Aorta (tissue), 5 donors: ENCODE measurements at regions of chr1 and their contacts with region 1.

Region 1: DNA sequence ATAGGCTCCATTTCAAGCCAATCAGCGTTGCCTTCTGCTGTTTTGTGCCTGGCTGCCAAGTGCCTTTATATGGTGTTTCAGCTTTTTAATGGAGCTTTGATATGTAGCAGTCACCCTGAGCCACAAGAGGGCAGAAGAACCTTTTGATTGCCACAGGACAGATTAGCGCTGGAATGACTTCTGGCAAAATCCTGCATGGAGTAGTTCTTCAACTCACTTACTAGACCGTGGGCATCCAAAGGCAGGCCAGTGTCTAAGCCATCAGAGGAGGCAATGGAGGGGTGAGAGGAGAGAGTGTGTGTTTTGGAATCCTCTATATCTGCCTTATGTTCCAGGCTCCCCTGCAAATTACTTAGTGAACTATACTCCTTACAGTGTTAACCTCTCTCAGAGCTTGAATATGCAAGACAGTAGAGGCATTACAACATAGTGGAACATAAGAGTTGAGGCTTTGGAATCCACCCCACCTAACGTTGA is 56.2 kb downstream of the ST3GAL3 start:
- DNase-seq: peak in 1 of 2 donors; percentile 75
- ATAC-seq: peak; percentile 95
- H3K4me3 ChIP-seq: no peak overlapping the region
- H3K27ac ChIP-seq: peak overlapping the region in 1 of 2 donors; percentile 17
- H3K4me1 ChIP-seq: peaks cover 0 to 3% of the 10 kb centered on the region in 2 donors
- H3K27me3 ChIP-seq: no peaks in the 10 kb centered on the region

Region 2: GRCh38 chr1:43435146-43436145 is 328.1 kb before region 1 on chr1:
- intact Hi-C with region 1: no loop called
- DNase-seq: peak; percentile 63 to 67
- ATAC-seq: peak; percentile 86
- H3K4me3 ChIP-seq: no peak overlapping the region
- H3K27ac ChIP-seq: peak overlapping the region in 1 of 2 donors; percentile 29
- H3K4me1 ChIP-seq: no peaks in the 10 kb centered on the region
- H3K27me3 ChIP-seq: no peaks in the 10 kb centered on the region

Region 3: GRCh38 chr1:43934101-43934985 is 170.8 kb after region 1 on chr1:
- intact Hi-C with region 1: loop called (anchors 1 to 2 kb)
- DNase-seq: peak; percentile 70 to 88
- ATAC-seq: peak; percentile 63
- H3K4me3 ChIP-seq: no peak overlapping the region
- H3K27ac ChIP-seq: no peak overlapping the region
- H3K4me1 ChIP-seq: no peaks in the 10 kb centered on the region
- H3K27me3 ChIP-seq: no peaks in the 10 kb centered on the region

Region 4: GRCh38 chr1:43991476-43992231 is 228.1 kb after region 1 on chr1 and contains the start of gene CCDC24:
- intact Hi-C with region 1: no loop called
- DNase-seq: peak; percentile 93 to 97
- ATAC-seq: peak; percentile 92
- H3K4me3 ChIP-seq: peak within 1 kb of the TSS; percentile 36 to 55
- H3K27ac ChIP-seq: peak within 1 kb of the TSS in 1 of 2 donors; percentile 34
- H3K4me1 ChIP-seq: no peaks in the 10 kb centered on the region
- H3K27me3 ChIP-seq: no peaks in the 10 kb centered on the region
- total RNA-seq, gene CCDC24: 2.6 to 6.0 TPM

Region 5: DNA sequence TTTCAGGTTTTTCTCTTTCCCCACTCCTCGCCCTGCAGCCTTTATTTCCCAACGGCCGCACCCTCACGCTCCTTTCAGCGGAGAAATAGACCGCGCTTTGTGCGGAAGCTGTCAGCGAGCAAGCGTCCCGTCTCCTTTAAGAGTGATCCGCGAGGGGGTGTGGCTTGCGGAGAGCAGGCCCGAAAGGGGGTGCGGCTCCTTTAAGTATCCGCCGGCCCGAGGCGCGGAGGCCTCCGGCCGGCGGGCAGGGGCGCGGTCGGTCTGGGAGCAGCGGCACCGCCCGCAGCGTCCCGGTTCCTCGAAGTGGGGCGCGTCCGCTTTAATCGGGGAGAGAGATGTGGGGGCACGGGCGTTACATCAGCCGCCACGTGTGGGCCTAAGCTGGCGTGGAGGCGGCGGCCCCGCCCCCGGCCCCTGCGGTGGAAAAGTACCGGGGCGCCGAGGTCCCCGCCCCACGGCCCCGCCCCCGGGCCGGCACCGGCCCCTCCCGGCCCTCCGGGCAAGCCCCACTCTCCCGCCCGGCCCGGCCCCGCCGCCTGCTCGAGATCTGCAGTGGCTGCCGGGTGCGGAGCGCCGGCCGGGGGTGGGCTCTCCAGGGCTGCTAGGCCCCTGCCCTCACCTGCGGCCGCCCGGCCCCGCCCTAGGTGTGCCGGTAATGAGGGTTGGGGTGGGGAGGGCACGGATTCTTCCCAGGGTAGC is 266.5 kb after region 1 on chr1:
- intact Hi-C with region 1: loop called in 1 of 2 experiments (anchors 5 kb)
- DNase-seq: peak; percentile 94 to 95
- ATAC-seq: peak; percentile 90
- H3K4me3 ChIP-seq: peak overlapping the region; percentile 72 to 79
- H3K27ac ChIP-seq: peak overlapping the region in 1 of 2 donors; percentile 75
- H3K4me1 ChIP-seq: no peaks in the 10 kb centered on the region
- H3K27me3 ChIP-seq: no peaks in the 10 kb centered on the region